ENCODE measurements at regions of chr2 and their contacts with region 1.

Region 1: DNA sequence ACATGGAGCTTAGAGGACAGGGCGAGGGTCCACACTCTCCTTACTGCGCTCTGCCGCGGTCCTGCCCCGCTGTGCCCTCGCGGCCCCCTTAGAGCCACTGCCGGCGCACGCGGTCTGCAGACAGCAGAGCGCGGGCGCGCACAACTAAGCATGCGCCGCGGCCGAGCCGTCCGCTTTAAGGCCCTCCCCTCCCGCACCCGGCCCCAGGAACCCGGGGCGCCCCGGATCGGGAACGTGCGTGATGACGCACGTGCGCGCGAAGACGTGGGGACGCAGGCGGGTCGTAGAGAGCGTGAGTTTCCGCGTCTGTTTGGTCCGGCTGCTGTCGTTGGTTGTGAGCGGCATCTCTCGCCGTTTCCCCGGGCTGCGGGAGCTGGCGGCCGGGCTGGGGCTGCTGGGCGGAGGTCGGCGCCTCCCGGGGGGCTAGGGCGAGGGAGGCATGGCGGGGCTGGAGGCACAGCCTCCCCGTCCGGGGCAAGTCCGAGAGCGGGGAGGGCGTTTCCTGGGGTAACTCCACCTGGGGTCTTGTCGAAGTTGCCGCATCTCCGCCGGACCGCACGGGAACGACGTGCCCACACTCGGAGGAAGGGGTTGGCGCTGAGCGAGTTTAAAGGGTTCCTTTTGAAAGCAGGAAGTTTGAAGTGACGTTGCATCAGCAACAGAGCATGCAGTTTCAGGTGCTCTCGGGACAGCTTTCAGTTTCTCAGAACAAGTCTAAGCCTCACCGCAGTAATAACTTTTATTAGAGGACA is at the start of gene RHBDD1:
- DNase-seq: peak; percentile 98
- ATAC-seq: peak; percentile 84
- H3K4me3 ChIP-seq: peak within 1 kb of the TSS; percentile 63 to 89 (median 81)
- H3K4me3 Mint-ChIP-seq: peak within 1 kb of the TSS; percentile 98
- H3K27ac ChIP-seq: peak within 1 kb of the TSS; percentile 95 to 99
- H3K27ac Mint-ChIP-seq: peak within 1 kb of the TSS; percentile 100
- H3K4me1 ChIP-seq: peaks cover 46 to 50% of the 10 kb centered on the region in 2 donors
- H3K4me1 Mint-ChIP-seq: peaks cover 52% of the 10 kb centered on the region
- H3K27me3 ChIP-seq: no peaks in the 10 kb centered on the region
- H3K27me3 Mint-ChIP-seq: no peaks in the 10 kb centered on the region
- CTCF ChIP-seq: no peak
- total RNA-seq, gene RHBDD1: 128 and 142 TPM in 2 replicates

Region 2: GRCh38 chr2:225735844-225736243 is 1100.1 kb before region 1 on chr2:
- CTCF ChIA-PET with region 1: no interaction called
- POLR2A ChIA-PET with region 1: no interaction called
- intact Hi-C with region 1: no loop called
- DNase-seq: no peak
- ATAC-seq: no peak
- H3K4me3 ChIP-seq: no peak overlapping the region
- H3K4me3 Mint-ChIP-seq: no peak overlapping the region
- H3K27ac ChIP-seq: no peak overlapping the region
- H3K27ac Mint-ChIP-seq: no peak overlapping the region
- H3K4me1 ChIP-seq: no peaks in the 10 kb centered on the region
- H3K4me1 Mint-ChIP-seq: no peaks in the 10 kb centered on the region
- H3K27me3 ChIP-seq: no peaks in the 10 kb centered on the region
- H3K27me3 Mint-ChIP-seq: peaks cover 5% of the 10 kb centered on the region
- CTCF ChIP-seq: no peak

Region 3: DNA sequence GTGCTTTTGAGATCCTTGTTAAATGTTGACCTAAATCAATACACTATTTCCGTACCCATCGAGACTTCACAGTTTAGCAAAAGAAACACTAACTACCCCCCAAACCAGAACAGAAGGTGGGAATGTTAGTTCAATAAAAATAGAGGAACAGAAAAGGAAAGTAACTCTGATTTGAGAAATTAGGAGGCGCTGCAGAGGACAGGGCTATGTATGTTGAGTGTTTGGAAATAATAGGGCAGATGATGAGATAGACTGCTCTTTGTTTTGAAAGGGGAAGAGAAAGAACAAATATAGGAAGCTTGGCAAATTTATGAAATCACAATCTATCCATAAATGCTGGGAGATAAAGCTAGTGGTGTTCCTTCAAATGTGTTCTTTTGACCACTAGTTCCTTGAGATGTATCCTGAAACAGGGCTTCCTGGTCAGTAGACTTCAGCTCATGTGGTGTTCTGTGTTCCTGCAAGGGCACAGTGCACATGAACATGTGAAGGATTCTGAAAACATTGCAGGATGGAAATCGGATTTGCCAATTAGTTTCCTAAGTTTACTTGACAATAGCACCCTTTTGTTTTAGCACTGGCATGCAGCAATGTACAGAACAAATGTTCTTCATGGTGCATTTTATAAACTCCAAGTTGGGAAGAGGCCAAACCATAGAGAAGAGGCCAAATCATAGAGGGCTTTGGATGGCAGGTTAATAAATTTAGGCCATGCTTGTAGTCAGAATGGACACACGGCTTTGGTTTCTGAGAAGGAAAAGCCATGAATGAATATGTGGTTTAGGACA is 39.7 kb after region 1 on chr2:
- CTCF ChIA-PET with region 1: interaction called, 6 read pairs
- POLR2A ChIA-PET with region 1: no interaction called
- intact Hi-C with region 1: loop called (anchors 5 kb)
- DNase-seq: peak; percentile 37
- ATAC-seq: no peak
- H3K4me3 ChIP-seq: no peak overlapping the region
- H3K4me3 Mint-ChIP-seq: no peak overlapping the region
- H3K27ac ChIP-seq: no peak overlapping the region
- H3K27ac Mint-ChIP-seq: no peak overlapping the region
- H3K4me1 ChIP-seq: peaks cover 21 to 31% of the 10 kb centered on the region in 2 donors
- H3K4me1 Mint-ChIP-seq: peaks cover 42% of the 10 kb centered on the region
- H3K27me3 ChIP-seq: no peaks in the 10 kb centered on the region
- H3K27me3 Mint-ChIP-seq: no peaks in the 10 kb centered on the region
- CTCF ChIP-seq: no peak

Region 4: DNA sequence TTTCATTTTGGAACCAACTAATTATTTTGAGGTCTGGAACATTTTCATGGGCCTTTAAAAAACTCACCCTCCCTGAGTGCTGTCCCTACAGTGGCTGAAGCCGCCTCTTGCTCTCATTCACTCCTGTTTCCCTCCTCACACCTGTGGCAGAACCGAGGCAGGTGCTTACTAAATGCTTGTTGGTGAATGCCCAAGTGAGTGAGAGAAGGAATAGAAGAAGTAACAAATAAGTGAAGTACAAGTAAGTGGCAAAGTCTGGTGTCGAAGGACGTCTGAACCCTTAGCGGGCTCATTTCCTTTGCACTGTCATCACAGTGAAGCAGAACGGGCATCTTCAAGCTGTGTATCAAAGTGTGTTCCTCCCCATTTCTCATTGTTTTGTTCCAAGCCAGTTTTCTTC is 135.1 kb after region 1 on chr2:
- CTCF ChIA-PET with region 1: interaction called, 6 read pairs
- POLR2A ChIA-PET with region 1: interaction called, 3 read pairs
- intact Hi-C with region 1: loop called (anchors 1 kb)
- DNase-seq: peak; percentile 65
- ATAC-seq: peak; percentile 64
- H3K4me3 ChIP-seq: peak overlapping the region in 3 of 5 experiments; percentile 7 to 66 (median 41)
- H3K4me3 Mint-ChIP-seq: peak overlapping the region; percentile 88
- H3K27ac ChIP-seq: peak overlapping the region; percentile 79 to 92
- H3K27ac Mint-ChIP-seq: peak overlapping the region; percentile 99
- H3K4me1 ChIP-seq: peaks cover 27 to 31% of the 10 kb centered on the region in 2 donors
- H3K4me1 Mint-ChIP-seq: peaks cover 44% of the 10 kb centered on the region
- H3K27me3 ChIP-seq: no peaks in the 10 kb centered on the region
- H3K27me3 Mint-ChIP-seq: no peaks in the 10 kb centered on the region
- CTCF ChIP-seq: no peak